ENCODE measurements at regions of chr2 and their contacts with region 1.

Region 1: DNA sequence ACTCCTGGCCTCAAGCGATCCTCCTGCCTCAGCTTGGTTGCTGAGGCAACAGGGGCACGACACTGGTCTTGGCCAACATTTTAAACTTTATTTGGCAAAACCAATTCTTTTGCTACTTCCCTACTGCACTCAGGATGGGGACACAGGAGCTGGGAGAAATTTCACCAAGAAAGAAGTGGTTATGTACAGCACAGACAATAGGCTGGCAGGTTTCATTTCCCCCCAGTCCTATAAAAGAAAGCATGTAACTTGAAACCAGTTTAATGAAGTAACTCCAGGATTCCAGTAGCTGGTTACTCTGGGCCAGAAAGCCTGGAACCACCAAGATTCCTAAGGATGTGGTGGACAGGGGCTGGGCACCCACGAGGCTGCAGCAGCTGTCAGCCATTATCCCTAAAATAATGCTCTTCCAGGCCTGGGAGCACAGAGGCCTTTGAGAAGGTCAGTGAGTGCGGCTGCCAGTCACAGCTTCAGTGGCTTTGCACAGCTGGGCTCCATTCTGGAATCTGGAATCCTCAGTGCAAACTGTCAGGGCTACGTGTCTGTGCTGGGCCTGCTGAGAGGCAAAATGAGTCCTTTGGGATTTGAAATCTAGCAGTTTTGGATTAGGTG is 142.3 kb upstream of the ITGA6 start:
- DNase-seq: peak; percentile 79
- H3K4me3 ChIP-seq: no peak overlapping the region
- H3K27ac ChIP-seq: peak overlapping the region; percentile 94
- H3K4me1 ChIP-seq: peaks cover 76% of the 10 kb centered on the region
- H3K27me3 ChIP-seq: no peaks in the 10 kb centered on the region
- CTCF ChIP-seq: no peak
- POLR2A ChIP-seq: no peak

Region 2: DNA sequence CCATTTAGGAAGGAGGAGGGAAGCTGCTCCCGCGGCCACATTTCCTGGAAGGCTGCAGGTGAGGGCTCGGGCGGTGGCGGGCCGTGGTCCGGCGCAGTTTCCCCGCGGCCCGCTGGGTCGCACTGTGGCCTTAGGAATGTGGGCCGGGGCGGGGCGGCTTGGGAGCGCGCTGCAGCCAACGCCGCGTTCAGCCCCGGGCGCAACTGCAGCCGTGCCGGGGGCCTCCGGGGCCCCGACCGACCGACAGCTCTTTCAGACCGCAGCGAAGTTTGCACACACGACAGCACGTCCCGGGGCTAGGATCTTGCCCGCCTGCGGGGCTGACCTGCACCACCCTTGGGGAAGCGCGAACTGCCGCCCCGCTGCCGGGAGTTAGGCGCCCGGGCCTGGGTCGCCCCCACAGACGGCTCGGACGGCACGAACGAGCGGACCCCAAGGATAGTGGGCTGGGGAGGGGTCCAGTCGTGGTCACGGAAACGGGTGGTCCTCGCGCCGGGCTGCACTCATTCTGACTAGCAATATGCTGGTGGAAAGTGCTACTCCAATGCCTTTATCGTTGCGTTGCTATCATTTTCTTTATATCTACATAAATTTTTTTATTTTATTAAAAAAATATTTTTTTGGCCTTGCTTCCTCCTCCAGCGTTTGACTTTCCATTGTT is 112.5 kb before region 1 on chr2:
- CTCF ChIA-PET with region 1: interaction called, 13 read pairs
- POLR2A ChIA-PET with region 1: no interaction called
- dilution Hi-C with region 1: no loop called
- intact Hi-C with region 1: loop called (anchors 1 kb)
- DNase-seq: peak; percentile 52
- H3K4me3 ChIP-seq: peak overlapping the region; percentile 12 to 50 (median 50)
- H3K27ac ChIP-seq: no peak overlapping the region
- H3K4me1 ChIP-seq: peaks cover 4% of the 10 kb centered on the region
- H3K27me3 ChIP-seq: no peaks in the 10 kb centered on the region
- CTCF ChIP-seq: peak; percentile 83 to 90
- POLR2A ChIP-seq: no peak

Region 3: GRCh38 chr2:172234716-172235691 is 50.1 kb before region 1 on chr2:
- CTCF ChIA-PET with region 1: interaction called, 6 read pairs
- POLR2A ChIA-PET with region 1: interaction called, 3 read pairs
- dilution Hi-C with region 1: no loop called
- intact Hi-C with region 1: loop called (anchors 1 kb)
- DNase-seq: peak; percentile 45
- H3K4me3 ChIP-seq: peak overlapping the region; percentile 27 to 57 (median 57)
- H3K27ac ChIP-seq: no peak overlapping the region
- H3K4me1 ChIP-seq: peaks cover 31% of the 10 kb centered on the region
- H3K27me3 ChIP-seq: no peaks in the 10 kb centered on the region
- CTCF ChIP-seq: peak in 1 of 2 donors; percentile 26
- POLR2A ChIP-seq: no peak

Region 4: GRCh38 chr2:172261292-172261691 is 23.8 kb before region 1 on chr2:
- CTCF ChIA-PET with region 1: no interaction called
- POLR2A ChIA-PET with region 1: no interaction called
- dilution Hi-C with region 1: no loop called
- intact Hi-C with region 1: no loop called
- DNase-seq: no peak
- H3K4me3 ChIP-seq: no peak overlapping the region
- H3K27ac ChIP-seq: no peak overlapping the region
- H3K4me1 ChIP-seq: no peaks in the 10 kb centered on the region
- H3K27me3 ChIP-seq: no peaks in the 10 kb centered on the region
- CTCF ChIP-seq: no peak
- POLR2A ChIP-seq: no peak

Region 5: GRCh38 chr2:172307800-172308199 is 22.7 kb after region 1 on chr2:
- CTCF ChIA-PET with region 1: interaction called, 10 read pairs
- POLR2A ChIA-PET with region 1: interaction called, 3 read pairs
- dilution Hi-C with region 1: no loop called
- intact Hi-C with region 1: loop called (anchors 1 kb)
- DNase-seq: peak; percentile 94
- H3K4me3 ChIP-seq: no peak overlapping the region
- H3K27ac ChIP-seq: peak overlapping the region; percentile 88
- H3K4me1 ChIP-seq: peaks cover 31% of the 10 kb centered on the region
- H3K27me3 ChIP-seq: no peaks in the 10 kb centered on the region
- CTCF ChIP-seq: no peak
- POLR2A ChIP-seq: no peak

Region 6: DNA sequence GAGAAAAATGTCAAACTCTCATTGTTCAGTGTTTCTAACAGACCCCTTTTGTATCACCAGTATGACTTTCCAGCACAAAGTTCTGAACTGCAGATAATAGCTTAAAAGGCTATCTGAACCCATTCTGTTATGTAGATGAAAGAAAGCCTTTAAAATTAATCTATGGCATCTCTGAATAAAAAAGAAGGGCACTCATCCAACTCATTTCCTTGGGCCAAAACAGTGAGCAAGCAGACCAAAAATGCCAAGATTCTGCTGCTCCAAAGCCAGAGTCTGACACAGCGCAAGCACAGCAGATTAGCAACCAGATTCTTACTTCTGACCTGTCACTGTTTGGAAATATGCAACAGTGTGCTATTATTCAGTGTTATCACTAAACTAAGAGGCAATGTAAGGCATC is 119.7 kb after region 1 on chr2:
- CTCF ChIA-PET with region 1: no interaction called
- POLR2A ChIA-PET with region 1: no interaction called
- dilution Hi-C with region 1: no loop called
- intact Hi-C with region 1: loop called (anchors 2 kb)
- DNase-seq: peak; percentile 78
- H3K4me3 ChIP-seq: no peak overlapping the region
- H3K27ac ChIP-seq: no peak overlapping the region
- H3K4me1 ChIP-seq: peaks cover 29% of the 10 kb centered on the region
- H3K27me3 ChIP-seq: no peaks in the 10 kb centered on the region
- CTCF ChIP-seq: no peak
- POLR2A ChIP-seq: no peak

Region 7: GRCh38 chr2:172442072-172442895 is 157.2 kb after region 1 on chr2:
- CTCF ChIA-PET with region 1: interaction called, 14 read pairs
- POLR2A ChIA-PET with region 1: no interaction called
- dilution Hi-C with region 1: no loop called
- intact Hi-C with region 1: no loop called
- DNase-seq: peak; percentile 69
- H3K4me3 ChIP-seq: no peak overlapping the region
- H3K27ac ChIP-seq: peak overlapping the region; percentile 60
- H3K4me1 ChIP-seq: peaks cover 65% of the 10 kb centered on the region
- H3K27me3 ChIP-seq: no peaks in the 10 kb centered on the region
- CTCF ChIP-seq: no peak
- POLR2A ChIP-seq: no peak